ENCODE measurements at regions of chr6 and their contacts with region 1.

Region 1: DNA sequence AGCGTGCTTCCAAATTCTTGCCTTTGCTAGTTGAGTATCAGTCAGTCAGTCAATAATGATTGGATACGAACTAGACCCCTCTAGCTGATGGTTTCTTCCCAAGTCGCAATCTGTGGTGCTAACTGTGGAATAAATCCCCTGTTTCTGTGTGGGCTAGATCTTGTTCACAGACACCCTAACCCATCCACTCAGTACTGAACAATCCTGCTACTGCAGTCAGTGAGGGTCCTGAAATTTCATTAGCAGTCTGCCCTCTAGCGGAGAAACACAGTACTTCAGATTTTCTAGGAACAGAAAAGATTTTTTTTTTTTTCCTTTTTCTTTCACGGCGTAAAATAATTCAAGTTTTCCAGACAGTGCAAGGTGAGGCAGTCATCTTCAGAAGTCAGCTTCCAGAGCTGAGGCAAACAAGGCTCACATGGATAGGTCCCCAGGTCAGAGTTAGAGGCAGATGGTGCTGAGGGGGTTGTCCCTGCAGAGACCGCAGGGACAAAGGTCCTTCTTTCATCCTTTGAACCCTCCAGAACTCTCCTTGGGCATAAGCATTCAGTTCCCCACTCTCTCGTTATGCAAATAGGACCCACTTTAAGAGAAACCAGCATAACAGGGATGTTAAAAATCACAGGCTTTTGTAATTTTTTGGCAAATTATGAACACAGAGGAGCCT is 119.6 kb downstream of the SCML4 start:
- DNase-seq: no peak
- H3K4me3 ChIP-seq: peak overlapping the region in 1 of 4 donors; percentile 17
- H3K27ac ChIP-seq: no peak overlapping the region
- H3K4me1 ChIP-seq: peaks cover 0 to 8% (median 4%) of the 10 kb centered on the region in 4 donors
- H3K27me3 ChIP-seq: no peaks in the 10 kb centered on the region
- CTCF ChIP-seq: peak; percentile 64 to 83 (median 81)
- EP300 ChIP-seq: no peak
- POLR2A ChIP-seq: no peak

Region 2: GRCh38 chr6:107319906-107320530 is 384.5 kb before region 1 on chr6:
- intact Hi-C with region 1: loop called (anchors 5 kb)
- DNase-seq: no peak
- H3K4me3 ChIP-seq: no peak overlapping the region
- H3K27ac ChIP-seq: no peak overlapping the region
- H3K4me1 ChIP-seq: no peaks in the 10 kb centered on the region
- H3K27me3 ChIP-seq: no peaks in the 10 kb centered on the region
- CTCF ChIP-seq: no peak
- EP300 ChIP-seq: no peak
- POLR2A ChIP-seq: no peak

Region 3: DNA sequence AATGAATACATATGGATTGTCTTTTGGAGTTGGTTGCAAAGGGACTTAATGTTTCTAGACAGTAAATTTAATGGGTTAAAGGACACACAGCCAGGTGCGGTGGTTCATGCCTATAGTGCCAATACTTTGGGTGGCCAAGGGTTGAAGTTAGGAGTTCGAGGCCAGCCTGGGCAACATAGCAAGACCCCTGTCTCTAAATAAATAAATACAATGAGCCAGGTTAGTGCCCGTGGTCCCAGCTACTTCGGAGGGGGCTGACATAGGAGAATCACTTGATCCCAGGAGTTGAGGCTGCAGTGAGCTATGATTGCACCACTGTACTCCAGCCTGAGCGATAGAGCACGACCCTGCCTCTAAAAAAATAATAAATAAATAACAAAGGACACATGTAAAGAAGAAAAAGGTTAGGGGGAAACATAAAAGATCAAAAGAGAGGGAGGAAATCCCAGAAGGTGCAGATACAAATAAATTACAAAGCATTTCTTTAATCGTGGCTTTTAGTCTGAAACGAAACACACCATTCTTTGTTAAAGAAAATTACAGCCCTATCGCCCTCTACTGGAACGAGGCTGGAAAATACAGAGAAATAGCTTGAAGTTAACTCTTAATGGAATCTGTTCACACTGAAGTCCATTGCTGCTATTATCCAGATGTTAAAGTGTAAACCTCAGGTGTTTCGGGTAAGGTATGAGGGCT is 162.3 kb after region 1 on chr6:
- intact Hi-C with region 1: no loop called
- DNase-seq: no peak
- H3K4me3 ChIP-seq: no peak overlapping the region
- H3K27ac ChIP-seq: no peak overlapping the region
- H3K4me1 ChIP-seq: no peaks in the 10 kb centered on the region
- H3K27me3 ChIP-seq: no peaks in the 10 kb centered on the region
- CTCF ChIP-seq: peak in 2 of 3 experiments; percentile 15 to 48
- EP300 ChIP-seq: no peak
- POLR2A ChIP-seq: no peak

Region 4: DNA sequence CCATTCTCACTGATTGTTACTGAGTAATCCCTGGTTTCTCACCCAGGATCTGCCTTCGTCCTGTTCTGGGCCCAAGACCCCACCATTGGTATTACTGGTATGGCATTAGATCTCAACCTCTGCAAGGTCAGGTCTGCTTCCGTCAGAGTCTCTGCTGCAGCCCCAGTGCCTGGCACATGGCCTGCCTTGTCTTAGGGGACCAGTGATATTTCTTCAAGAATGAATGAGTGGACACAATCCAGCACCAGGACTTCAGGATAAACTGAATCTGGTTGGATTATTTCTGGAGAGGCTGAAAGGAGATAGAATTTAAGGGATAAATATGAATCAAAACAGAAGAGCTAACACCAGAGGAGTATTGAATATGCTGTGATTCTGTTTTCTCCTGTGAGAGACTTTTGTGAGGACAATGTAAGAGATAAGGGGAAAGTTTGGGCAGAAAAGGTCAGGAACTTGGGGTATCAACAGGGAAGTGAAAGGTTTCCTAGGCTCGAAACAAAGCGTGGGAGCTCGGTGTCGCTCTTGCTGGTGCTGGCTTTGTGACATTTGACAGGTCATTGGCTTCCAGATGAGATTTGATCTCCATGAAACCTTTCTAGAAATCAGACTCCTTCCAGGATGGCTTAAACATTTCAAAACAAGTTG is 316.1 kb after region 1 on chr6:
- intact Hi-C with region 1: no loop called
- DNase-seq: no peak
- H3K4me3 ChIP-seq: no peak overlapping the region
- H3K27ac ChIP-seq: no peak overlapping the region
- H3K4me1 ChIP-seq: no peaks in the 10 kb centered on the region
- H3K27me3 ChIP-seq: no peaks in the 10 kb centered on the region
- CTCF ChIP-seq: no peak
- EP300 ChIP-seq: no peak
- POLR2A ChIP-seq: no peak

Measured in esophagus muscularis mucosa (tissue), 4 donors.